ENCODE measurements at regions of chr16 and their contacts with region 1.

Region 1: DNA sequence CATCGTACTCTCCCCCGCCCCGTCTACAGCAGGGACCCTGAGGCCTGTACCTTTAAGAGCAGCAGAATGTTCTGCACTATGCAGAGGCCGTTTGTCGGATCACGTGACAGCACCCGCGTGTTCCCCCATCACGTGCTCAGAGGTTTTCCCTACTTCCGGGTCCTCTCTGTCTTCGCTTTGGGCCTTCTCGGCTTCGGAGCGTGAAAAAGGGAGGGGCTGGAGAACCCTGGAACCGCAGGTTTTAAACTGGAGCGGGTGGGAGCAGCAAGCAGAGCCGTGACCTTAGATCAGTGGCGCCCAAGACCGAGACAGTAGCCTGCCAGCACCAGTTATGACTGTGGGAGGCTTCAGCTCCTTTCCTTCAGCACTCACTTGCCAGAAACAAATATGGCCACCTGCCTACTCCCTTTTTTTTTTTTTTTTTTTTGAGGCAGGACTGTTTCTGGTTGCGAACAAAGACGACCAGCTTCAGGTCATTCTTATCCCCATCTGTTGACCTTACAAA is at the start of gene CLN3:
- DNase-seq: peak; percentile 91 to 95
- ATAC-seq: peak; percentile 98 to 99 (median 98)
- H3K4me3 ChIP-seq: peak within 1 kb of the TSS; percentile 100
- H3K27ac ChIP-seq: peak within 1 kb of the TSS; percentile 98
- H3K4me1 ChIP-seq: no peaks in the 10 kb centered on the region
- H3K27me3 ChIP-seq: no peaks in the 10 kb centered on the region
- CTCF ChIP-seq: no peak
- total RNA-seq, gene CLN3: 10.8 to 15.3 (median 14.0) TPM

Region 2: DNA sequence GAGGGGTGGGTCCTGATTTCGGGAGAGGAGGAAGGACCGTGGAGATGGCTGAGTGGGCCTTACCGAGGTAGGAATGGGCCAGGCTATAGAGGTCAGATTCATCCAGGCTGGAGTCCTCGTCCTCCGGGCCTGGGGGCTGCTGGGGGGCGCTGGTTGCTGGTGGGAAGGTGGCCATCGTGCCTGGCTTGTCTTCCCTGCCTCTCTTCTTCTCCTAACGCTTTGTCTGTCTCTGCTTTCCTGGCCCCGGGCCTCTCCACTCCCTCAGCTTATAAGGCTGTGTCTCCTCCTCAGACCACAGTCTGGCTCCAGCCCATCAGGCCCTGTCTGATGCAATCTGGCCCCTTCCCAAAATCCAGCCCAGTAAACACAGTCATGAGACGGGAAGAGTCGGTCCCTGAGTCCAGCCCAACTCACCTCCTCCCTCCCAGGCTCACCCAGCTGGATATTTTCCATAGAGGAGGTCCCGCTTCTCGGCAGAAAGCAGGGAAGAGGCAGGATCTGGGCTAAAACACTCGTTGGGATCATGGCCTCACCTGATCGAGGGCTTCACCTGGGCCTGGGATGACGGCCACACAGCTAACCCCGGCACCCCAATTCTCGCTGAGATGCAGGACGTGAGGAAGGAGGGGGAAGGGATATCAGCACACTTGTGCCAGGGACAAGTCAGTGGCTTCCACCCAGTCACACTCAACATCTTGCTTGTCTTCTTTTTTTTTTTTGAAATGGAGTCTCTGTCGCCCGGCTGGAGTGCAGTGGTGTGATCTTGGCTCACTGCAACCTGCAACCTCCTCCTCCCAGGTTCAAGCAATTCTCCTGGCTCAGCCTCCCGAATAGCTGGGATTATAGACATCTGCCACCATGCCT is 46.9 kb after region 1 on chr16 and contains the start of gene NUPR1:
- intact Hi-C with region 1: loop called in 1 of 2 experiments (anchors 5 kb)
- DNase-seq: peak; percentile 93 to 97
- ATAC-seq: peak; percentile 88 to 94 (median 90)
- H3K4me3 ChIP-seq: peak within 1 kb of the TSS; percentile 73
- H3K27ac ChIP-seq: peak within 1 kb of the TSS; percentile 97
- H3K4me1 ChIP-seq: peaks cover 33% of the 10 kb centered on the region
- H3K27me3 ChIP-seq: no peaks in the 10 kb centered on the region
- CTCF ChIP-seq: no peak
- total RNA-seq, gene NUPR1: 23.7 to 139 (median 34.9) TPM

Region 3: DNA sequence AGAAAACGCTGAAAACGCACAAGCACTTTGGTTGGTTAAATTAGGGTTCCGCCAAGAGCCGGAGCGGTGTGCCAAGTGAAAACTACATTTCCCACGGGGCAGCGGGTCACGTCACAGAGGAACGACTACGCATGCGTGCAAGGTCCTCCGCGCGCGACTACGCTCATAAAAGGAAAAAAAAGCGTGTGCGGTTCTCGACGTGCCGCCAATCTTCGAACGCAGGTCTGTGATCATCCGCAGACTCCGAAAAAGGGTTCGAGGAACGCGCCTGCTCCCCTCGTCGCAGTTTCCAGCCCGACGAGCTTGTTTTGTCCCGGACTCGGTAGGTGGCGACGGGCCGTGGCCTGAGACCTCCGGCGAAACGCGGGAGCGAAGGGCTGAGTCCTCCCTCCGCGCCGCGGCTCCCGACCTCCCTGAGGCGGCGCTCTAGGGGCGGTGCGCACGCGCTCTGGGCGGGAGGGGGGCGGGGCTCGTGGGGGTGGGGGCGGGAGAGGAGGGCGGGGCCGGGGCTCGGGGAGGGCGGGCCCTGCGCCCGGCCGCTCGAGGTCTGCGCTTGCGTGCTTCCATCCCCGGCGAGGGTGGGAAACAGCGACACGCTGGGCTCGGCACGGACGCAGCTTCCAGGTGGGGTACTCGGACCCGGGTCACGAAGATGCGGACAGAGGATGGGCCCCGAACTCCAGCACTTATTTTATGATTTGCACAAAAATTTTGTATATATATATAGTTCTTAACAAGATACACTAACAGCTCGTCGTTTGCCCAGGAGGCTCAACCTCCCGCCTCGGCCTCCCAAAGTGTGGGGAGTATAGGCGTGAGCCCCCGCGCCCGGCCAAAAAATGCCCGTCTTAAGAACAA is 62.0 kb after region 1 on chr16 and contains the start of gene SGF29:
- intact Hi-C with region 1: loop called in 1 of 2 experiments (anchors 1 kb)
- DNase-seq: peak; percentile 91 to 96
- ATAC-seq: peak; percentile 95 to 97 (median 96)
- H3K4me3 ChIP-seq: peak within 1 kb of the TSS; percentile 77
- H3K27ac ChIP-seq: peak within 1 kb of the TSS; percentile 96
- H3K4me1 ChIP-seq: peaks cover 6% of the 10 kb centered on the region
- H3K27me3 ChIP-seq: no peaks in the 10 kb centered on the region
- CTCF ChIP-seq: peak; percentile 25
- total RNA-seq, gene SGF29: 20.5 to 48.3 (median 25.9) TPM

Region 4: GRCh38 chr16:28606291-28607115 is 114.5 kb after region 1 on chr16:
- intact Hi-C with region 1: no loop called
- DNase-seq: no peak
- ATAC-seq: no peak
- H3K4me3 ChIP-seq: no peak overlapping the region
- H3K27ac ChIP-seq: no peak overlapping the region
- H3K4me1 ChIP-seq: peaks cover 10% of the 10 kb centered on the region
- H3K27me3 ChIP-seq: no peaks in the 10 kb centered on the region
- CTCF ChIP-seq: no peak

Region 5: DNA sequence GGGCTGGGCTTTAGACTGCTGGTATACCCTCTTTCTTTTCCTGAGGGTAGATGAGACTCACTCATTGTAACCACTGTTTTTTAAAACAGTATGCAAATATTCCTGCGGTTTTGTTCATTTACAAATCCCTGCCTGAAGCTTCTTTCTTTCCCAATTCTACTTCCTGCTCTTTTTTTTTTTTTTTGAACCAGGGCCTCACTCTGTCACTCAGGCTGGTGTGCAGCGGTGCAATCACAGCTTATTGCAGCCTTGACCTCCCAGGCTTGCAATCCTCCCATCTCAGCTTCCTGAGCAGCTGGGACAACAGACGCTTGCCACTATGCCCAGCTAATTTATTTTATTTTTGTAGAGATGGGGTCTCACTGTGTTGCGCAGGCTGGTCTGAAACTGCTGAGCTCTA is 125.9 kb after region 1 on chr16:
- intact Hi-C with region 1: loop called in 1 of 2 experiments (anchors 5 kb)
- DNase-seq: no peak
- ATAC-seq: no peak
- H3K4me3 ChIP-seq: no peak overlapping the region
- H3K27ac ChIP-seq: no peak overlapping the region
- H3K4me1 ChIP-seq: no peaks in the 10 kb centered on the region
- H3K27me3 ChIP-seq: no peaks in the 10 kb centered on the region
- CTCF ChIP-seq: no peak

Measured in psoas muscle (tissue), 8 donors.